G401 (cell line): ENCODE measurements at regions of chr3 and their contacts with region 1.

Region 1: GRCh38 chr3:142993958-142994442 is 7.4 kb upstream of the U2SURP start:
- DNase-seq: peak; percentile 73

Region 2: DNA sequence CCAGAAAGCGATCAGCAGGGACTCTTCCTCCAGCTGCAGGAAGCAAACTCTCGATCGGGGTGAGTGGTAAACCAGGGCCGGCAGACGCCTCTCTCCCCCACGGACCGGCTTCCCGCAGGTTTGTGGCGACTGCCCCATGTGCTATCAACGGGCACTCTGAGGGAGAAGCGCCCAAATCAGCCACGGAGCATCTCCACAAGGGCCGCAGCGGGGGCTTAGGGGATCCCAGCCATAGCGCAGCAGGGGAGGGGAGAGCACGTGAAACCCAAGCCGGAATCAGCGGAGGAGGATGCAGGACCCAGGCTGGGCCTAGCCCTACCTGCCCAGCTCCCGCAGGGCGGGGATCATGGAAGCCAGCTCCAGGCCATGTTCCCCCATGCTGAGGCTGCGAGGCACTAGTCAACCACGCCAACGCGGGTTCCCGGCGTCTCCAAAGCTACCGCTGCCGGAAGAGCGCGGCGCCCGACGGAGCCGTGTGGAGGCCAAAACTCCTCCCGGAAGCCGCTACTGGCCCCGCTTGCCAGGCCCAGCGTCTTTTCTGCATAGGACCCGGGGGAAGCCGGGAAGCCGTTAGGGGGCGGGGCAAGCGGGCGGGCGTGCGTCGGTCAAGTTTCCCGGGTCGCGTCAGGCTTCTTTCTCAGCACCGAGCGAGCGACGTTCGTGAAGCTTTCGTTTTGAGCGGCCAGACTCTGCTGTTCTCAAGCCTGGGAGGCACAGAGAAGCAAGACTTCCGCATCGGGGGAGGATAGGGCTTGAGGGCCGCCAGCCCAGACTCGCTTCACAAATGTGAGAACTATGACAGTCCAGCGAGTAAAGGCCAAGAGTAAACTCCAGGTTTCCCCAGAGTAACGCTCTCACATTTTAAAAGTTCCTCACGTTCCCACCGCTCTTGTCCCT is 415.4 kb before region 1 on chr3 and contains the start of gene ATR:
- in situ Hi-C with region 1: loop called (anchors 25 kb)
- DNase-seq: peak; percentile 93
- total RNA-seq, gene ATR: 7.7 and 26.1 TPM in 2 replicates

Region 3: GRCh38 chr3:142904639-142905436 is 89.2 kb before region 1 on chr3:
- in situ Hi-C with region 1: no loop called
- DNase-seq: no peak